Uterus (tissue), 4 donors: ENCODE measurements at regions of chr4 and their contacts with region 1.

Region 1: GRCh38 chr4:26330186-26330787 is 9.5 kb downstream of the RBPJ start:
- DNase-seq: no peak
- H3K4me3 ChIP-seq: no peak overlapping the region
- H3K27ac ChIP-seq: no peak overlapping the region
- H3K4me1 ChIP-seq: peaks cover 0 to 7% of the 10 kb centered on the region in 2 donors
- H3K27me3 ChIP-seq: no peaks in the 10 kb centered on the region
- CTCF ChIP-seq: peak; percentile 49 to 73 (median 64)
- POLR2A ChIP-seq: no peak

Region 2: GRCh38 chr4:26410385-26411293 is 80.4 kb after region 1 on chr4:
- intact Hi-C with region 1: loop called (anchors 10 kb)
- DNase-seq: peak in 1 of 2 donors; percentile 44
- H3K4me3 ChIP-seq: no peak overlapping the region
- H3K27ac ChIP-seq: peak overlapping the region in 1 of 2 donors; percentile 14
- H3K4me1 ChIP-seq: peaks cover 0 to 4% of the 10 kb centered on the region in 2 donors
- H3K27me3 ChIP-seq: no peaks in the 10 kb centered on the region
- CTCF ChIP-seq: peak; percentile 58 to 83 (median 65)
- POLR2A ChIP-seq: no peak